GM12878 (cell line): ENCODE measurements at regions of chr1 and their contacts with region 1.

Region 1: GRCh38 chr1:12153181-12153785 is 13.5 kb upstream of the TNFRSF1B start:
- DNase-seq: peak; percentile 78
- ATAC-seq: peak; percentile 68
- H3K4me3 ChIP-seq: no peak overlapping the region
- H3K27ac ChIP-seq: peak overlapping the region; percentile 84
- H3K4me1 ChIP-seq: peaks cover 76% of the 10 kb centered on the region
- H3K27me3 ChIP-seq: no peaks in the 10 kb centered on the region
- CTCF ChIP-seq: no peak
- EP300 ChIP-seq: 0 out of 4 replicates have a peak, but pooled peaks of 1 of the 2 experiments have one; percentile 6
- POLR2A ChIP-seq: 0 out of 2 replicates have a peak, but pooled peaks have one; percentile 40
- RAD21 ChIP-seq: no peak

Region 2: GRCh38 chr1:12166834-12167492 is 13.7 kb after region 1 on chr1 and contains the start of gene TNFRSF1B:
- CTCF ChIA-PET with region 1: interaction called, 47 read pairs
- POLR2A ChIA-PET with region 1: interaction called, 166 read pairs
- RAD21 ChIA-PET with region 1: interaction called, 119 read pairs
- SMC1A ChIA-PET with region 1: interaction called, 347 read pairs
- in situ Hi-C with region 1: no loop called
- intact Hi-C with region 1: loop called (anchors 2 kb)
- DNase-seq: no peak
- ATAC-seq: peak; percentile 72
- H3K4me3 ChIP-seq: peak within 1 kb of the TSS; percentile 91
- H3K27ac ChIP-seq: peak within 1 kb of the TSS; percentile 82
- H3K4me1 ChIP-seq: peaks cover 47% of the 10 kb centered on the region
- H3K27me3 ChIP-seq: no peaks in the 10 kb centered on the region
- CTCF ChIP-seq: no peak
- EP300 ChIP-seq: no peak
- POLR2A ChIP-seq: peak; percentile 98
- RAD21 ChIP-seq: no peak
- polyA plus RNA-seq, gene TNFRSF1B: 10.1 to 11.6 TPM

Region 3: GRCh38 chr1:12184008-12184681 is 30.9 kb after region 1 on chr1:
- CTCF ChIA-PET with region 1: no interaction called
- POLR2A ChIA-PET with region 1: interaction called, 14 read pairs
- RAD21 ChIA-PET with region 1: interaction called, 8 read pairs
- SMC1A ChIA-PET with region 1: interaction called, 347 read pairs
- in situ Hi-C with region 1: no loop called
- intact Hi-C with region 1: no loop called
- DNase-seq: no peak
- ATAC-seq: peak; percentile 76
- H3K4me3 ChIP-seq: no peak overlapping the region; the same call in 1 of the 2 replicates
- H3K27ac ChIP-seq: peak overlapping the region; percentile 47
- H3K4me1 ChIP-seq: peaks cover 20% of the 10 kb centered on the region
- H3K27me3 ChIP-seq: no peaks in the 10 kb centered on the region
- CTCF ChIP-seq: 0 out of 6 replicates have a peak, but pooled peaks of 1 of the 3 experiments have one; percentile 11
- EP300 ChIP-seq: no peak
- POLR2A ChIP-seq: no peak
- RAD21 ChIP-seq: 0 out of 2 replicates have a peak, but pooled peaks have one; percentile 29